Activated naive CD4-positive, alpha-beta T cell treated with anti-CD3 and anti-CD28 coated beads, Interleukin-2, amount 10 ng/mL, durations not matched to agents 7 days and 5 days (primary cell): ENCODE measurements at regions of chr1 and their contacts with region 1.

Region 1: GRCh38 chr1:154324669-154325582 is at the start of gene ATP8B2:
- DNase-seq: peak; percentile 86
- H3K4me3 Mint-ChIP-seq: peak within 1 kb of the TSS; percentile 91
- H3K27ac Mint-ChIP-seq: peak within 1 kb of the TSS; percentile 90
- H3K4me1 Mint-ChIP-seq: peaks cover 38% of the 10 kb centered on the region
- H3K27me3 Mint-ChIP-seq: peaks cover 46% of the 10 kb centered on the region

Region 2: DNA sequence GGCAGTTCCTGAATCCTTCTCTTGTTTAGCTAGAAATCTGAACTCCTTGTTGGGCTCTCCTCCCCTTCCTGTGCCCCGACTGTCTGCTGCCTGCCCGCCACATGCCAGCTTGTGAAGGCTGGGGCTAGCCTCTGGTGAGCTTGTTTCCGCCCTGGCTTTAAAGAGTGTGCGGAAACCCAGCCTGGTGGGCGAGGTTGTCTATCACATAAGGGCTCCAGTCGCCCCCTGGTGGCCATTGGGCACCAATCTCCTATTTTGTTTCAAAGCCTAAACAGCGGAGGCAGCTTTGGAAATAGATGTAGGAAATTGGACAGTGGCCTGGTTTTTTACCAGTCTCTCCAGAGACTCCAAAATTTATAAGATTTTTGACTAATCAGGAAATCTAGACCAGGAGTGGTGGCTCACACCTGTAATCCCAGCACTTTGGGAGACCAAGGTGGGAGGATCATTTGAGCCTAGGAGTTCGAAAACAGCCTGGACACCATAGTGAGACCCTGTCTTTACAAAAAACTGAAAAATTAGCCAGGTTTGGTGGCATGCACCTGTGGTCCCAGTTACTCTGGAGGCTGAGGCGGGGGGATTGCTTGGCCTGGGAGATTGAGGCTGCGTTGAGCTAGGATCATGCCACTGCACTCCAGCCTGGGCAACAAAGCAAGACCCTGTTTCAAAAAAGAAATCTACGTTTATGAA is 10.2 kb after region 1 on chr1:
- CTCF ChIA-PET with region 1: interaction called, 89 read pairs
- DNase-seq: peak; percentile 95
- H3K4me3 Mint-ChIP-seq: peak overlapping the region; percentile 58
- H3K27ac Mint-ChIP-seq: peak overlapping the region; percentile 89
- H3K4me1 Mint-ChIP-seq: peaks cover 94% of the 10 kb centered on the region
- H3K27me3 Mint-ChIP-seq: no peaks in the 10 kb centered on the region

Region 3: DNA sequence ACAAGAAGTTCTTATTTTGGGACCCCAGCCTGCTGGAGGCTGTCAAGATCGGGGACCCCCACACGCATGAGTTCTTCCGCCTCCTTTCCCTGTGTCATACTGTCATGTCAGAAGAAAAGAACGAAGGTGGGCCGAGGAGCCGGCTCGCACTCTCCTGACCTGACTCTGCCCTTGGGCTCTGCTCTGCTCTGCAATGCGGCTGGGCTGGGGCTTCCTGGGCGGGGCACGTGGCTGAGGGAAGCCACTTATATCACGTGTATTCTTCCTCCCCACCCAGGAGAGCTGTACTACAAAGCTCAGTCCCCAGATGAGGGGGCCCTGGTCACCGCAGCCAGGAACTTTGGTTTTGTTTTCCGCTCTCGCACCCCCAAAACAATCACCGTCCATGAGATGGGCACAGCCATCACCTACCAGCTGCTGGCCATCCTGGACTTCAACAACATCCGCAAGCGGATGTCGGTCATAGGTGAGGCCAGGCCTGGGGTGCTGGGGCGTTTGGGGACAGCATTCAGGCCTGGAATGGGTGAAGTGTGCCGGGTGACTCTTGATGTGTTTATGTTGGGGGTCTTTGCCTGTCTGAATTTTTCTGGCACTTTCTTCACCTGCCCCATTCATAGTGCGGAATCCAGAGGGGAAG is 18.0 kb after region 1 on chr1:
- CTCF ChIA-PET with region 1: interaction called, 11 read pairs
- DNase-seq: peak; percentile 88
- H3K4me3 Mint-ChIP-seq: peak overlapping the region; percentile 71
- H3K27ac Mint-ChIP-seq: peak overlapping the region; percentile 86
- H3K4me1 Mint-ChIP-seq: peaks cover 85% of the 10 kb centered on the region
- H3K27me3 Mint-ChIP-seq: no peaks in the 10 kb centered on the region

Region 4: DNA sequence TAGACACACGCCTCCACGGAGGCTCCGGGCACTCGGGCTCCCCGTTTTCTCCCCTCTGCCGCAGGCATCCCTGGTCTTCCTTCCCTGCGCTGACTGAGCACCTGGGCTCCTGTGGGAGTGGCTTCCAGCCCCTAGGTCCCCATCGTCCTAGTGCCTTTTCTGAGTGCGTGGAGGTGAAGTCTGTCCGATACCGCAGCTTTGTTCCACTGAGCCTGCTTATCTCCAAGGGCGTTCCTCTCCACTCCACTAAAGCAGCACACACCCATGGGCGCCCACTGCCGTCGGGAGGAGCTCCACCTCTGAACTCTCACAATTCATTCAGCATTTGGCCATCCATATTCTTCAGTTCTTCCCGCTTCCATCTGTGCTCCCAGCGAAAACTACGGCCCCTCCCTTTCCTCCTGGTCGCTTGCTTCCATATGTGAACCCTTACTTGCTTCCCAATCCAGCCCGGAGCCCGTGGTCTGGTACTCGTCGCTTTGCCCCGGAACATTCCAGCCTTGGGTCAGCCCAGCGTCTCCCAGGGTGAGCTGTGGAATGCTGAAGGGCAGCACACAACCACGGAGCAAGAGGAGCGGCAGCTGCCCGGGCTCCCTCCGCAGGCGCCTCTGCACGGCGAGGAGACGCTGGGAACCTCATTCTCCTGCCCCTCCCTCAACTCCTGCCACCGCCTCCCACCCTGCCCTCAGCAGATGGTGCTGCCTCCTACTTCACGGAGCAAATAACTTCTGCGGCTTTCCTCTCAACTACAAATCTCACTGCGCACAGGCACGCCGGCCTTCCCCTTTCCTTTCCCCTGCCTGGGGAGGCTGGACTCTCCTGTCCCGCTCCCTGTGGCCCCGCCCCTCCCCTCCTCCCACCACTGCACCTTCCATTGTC is 27.9 kb after region 1 on chr1:
- CTCF ChIA-PET with region 1: interaction called, 14 read pairs
- DNase-seq: peak; percentile 70
- H3K4me3 Mint-ChIP-seq: peak overlapping the region; percentile 60
- H3K27ac Mint-ChIP-seq: peak overlapping the region; percentile 83
- H3K4me1 Mint-ChIP-seq: peaks cover 42% of the 10 kb centered on the region
- H3K27me3 Mint-ChIP-seq: peaks cover 17% of the 10 kb centered on the region